ENCODE measurements at regions of chr1 and their contacts with region 1.

Region 1: DNA sequence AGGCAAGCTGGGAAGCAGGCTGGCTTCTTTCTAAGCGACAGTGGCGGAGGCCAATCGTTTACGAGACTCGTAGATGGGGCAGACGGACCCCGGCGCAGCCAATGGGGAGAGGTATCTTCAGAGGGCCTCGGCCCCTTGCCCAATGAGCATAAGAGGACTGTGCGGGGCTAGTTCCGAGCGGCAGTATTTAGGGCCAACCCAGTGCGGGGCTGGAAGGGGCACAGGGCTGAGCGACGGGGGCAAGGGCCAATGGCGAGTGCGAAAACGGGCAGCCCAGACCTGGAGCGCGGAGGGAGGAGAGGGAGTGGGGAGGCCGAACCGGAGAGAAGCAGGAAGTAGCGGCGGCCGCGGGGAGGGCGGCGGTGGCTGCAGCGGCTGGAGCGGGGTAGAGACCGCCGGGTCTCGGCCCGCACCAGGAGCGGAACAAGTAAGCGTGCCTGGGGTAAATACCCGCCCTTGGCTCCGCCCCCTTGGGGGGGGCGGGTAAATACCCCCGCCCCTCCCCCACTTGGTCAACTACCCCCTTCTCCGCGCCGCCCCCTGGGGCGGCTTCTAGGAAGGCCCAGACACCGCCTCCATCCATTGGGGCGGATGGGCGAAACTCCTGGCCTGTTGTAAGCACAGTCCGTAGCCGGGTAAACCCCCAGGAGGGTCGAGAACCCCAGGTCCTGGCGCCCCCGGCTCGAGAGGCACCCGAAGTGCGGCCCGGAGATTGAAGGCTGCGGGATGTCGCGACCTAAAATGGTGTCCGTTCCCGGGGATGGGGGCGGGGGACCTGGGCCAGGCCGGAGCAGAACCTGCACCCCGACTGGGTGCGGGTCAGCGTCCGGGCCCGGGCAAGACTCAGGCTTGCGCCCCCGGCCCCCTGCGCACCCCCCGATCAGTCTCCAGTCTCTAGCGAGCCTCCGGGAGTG is at the start of gene ZNF687:
- DNase-seq: peak; percentile 100
- H3K4me3 Mint-ChIP-seq: peak within 1 kb of the TSS; percentile 97
- H3K27ac Mint-ChIP-seq: peak within 1 kb of the TSS; percentile 99
- H3K4me1 Mint-ChIP-seq: peaks cover 19% of the 10 kb centered on the region
- H3K27me3 Mint-ChIP-seq: peaks cover 9% of the 10 kb centered on the region
- CTCF ChIP-seq: no peak
- total RNA-seq, gene ZNF687: 26.3 and 27.5 TPM in 2 replicates

Region 2: GRCh38 chr1:151189638-151190445 is 92.4 kb before region 1 on chr1 and contains the start of gene VPS72:
- CTCF ChIA-PET with region 1: no interaction called
- POLR2A ChIA-PET with region 1: interaction called, 19 read pairs
- intact Hi-C with region 1: no loop called
- DNase-seq: peak; percentile 93
- H3K4me3 Mint-ChIP-seq: peak within 1 kb of the TSS; percentile 83
- H3K27ac Mint-ChIP-seq: peak within 1 kb of the TSS; percentile 90
- H3K4me1 Mint-ChIP-seq: peaks cover 33% of the 10 kb centered on the region
- H3K27me3 Mint-ChIP-seq: no peaks in the 10 kb centered on the region
- CTCF ChIP-seq: no peak
- total RNA-seq, gene VPS72: 106 and 108 TPM in 2 replicates

Region 3: GRCh38 chr1:151198255-151199127 is 83.7 kb before region 1 on chr1 and contains the start of gene PIP5K1A:
- CTCF ChIA-PET with region 1: interaction called, 5 read pairs
- POLR2A ChIA-PET with region 1: interaction called, 38 read pairs
- intact Hi-C with region 1: loop called (anchors 1 kb)
- DNase-seq: peak; percentile 100
- H3K4me3 Mint-ChIP-seq: peak within 1 kb of the TSS; percentile 93
- H3K27ac Mint-ChIP-seq: peak within 1 kb of the TSS; percentile 95
- H3K4me1 Mint-ChIP-seq: peaks cover 40% of the 10 kb centered on the region
- H3K27me3 Mint-ChIP-seq: no peaks in the 10 kb centered on the region
- CTCF ChIP-seq: no peak
- total RNA-seq, gene PIP5K1A: 150 and 163 TPM in 2 replicates

Region 4: DNA sequence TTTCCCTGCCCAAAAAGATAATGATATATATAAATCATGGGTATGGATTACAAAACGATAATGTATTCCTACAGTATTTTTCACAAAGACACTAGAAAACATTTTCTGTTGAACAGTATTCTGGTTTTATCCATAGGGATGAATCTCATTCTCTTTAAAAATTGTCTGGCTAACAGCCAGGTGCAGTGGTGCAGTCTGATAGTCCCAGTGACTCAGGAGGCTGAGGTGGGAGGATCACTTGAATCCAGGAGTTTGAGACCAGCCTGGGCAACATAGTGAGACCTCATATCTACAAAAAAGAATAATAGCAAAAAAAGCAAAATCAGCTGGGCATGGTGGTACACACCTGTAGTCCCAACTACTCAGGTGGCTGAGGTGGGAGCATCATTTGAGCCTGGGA is 60.6 kb before region 1 on chr1:
- CTCF ChIA-PET with region 1: no interaction called
- POLR2A ChIA-PET with region 1: no interaction called
- intact Hi-C with region 1: no loop called
- DNase-seq: peak; percentile 26
- H3K4me3 Mint-ChIP-seq: no peak overlapping the region
- H3K27ac Mint-ChIP-seq: peak overlapping the region; percentile 43
- H3K4me1 Mint-ChIP-seq: peaks cover 14% of the 10 kb centered on the region
- H3K27me3 Mint-ChIP-seq: no peaks in the 10 kb centered on the region
- CTCF ChIP-seq: no peak

Region 5: DNA sequence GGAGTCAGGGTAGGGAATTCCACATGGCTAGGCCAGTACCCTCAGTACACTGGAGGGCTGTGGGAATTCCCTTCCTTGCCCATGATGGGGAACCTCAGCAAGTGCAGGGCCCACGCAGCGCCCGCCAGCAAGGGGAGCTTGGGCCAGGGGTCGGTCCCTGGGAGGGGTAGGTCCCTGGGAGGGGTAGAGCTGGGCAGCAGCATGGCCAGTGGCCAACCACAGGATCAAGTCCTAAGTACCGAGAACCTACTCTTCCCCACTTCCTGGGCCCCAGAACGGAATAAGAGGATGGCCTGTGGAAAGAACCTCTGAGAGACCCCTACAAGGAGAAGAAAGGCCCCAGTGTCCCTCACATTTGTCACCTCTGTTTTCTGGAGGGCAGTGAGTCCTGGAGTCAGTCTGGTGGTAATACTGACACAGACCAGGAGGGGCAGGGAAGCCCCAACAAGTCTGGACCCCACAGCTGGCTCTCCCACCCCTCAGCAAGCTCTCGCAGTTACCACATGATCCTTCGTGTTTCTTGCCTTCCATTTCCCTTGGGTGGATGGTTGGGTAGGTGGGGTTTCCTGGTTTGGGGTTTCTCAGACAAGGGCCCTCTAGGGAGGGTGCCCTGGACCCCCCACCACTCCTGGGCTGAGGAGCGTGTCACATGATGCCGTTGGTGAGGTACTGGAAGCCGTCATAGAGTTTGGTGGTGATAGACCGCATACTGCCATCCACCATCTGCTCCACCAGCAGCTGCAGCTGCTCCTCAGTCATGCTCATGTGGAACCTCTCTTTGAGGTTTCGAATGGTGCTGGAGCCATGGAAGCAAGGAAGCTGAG is 10.2 kb after region 1 on chr1:
- CTCF ChIA-PET with region 1: interaction called, 5 read pairs
- POLR2A ChIA-PET with region 1: interaction called, 39 read pairs
- intact Hi-C with region 1: no loop called
- DNase-seq: no peak
- H3K4me3 Mint-ChIP-seq: no peak overlapping the region
- H3K27ac Mint-ChIP-seq: no peak overlapping the region
- H3K4me1 Mint-ChIP-seq: no peaks in the 10 kb centered on the region
- H3K27me3 Mint-ChIP-seq: no peaks in the 10 kb centered on the region
- CTCF ChIP-seq: no peak

Region 6: DNA sequence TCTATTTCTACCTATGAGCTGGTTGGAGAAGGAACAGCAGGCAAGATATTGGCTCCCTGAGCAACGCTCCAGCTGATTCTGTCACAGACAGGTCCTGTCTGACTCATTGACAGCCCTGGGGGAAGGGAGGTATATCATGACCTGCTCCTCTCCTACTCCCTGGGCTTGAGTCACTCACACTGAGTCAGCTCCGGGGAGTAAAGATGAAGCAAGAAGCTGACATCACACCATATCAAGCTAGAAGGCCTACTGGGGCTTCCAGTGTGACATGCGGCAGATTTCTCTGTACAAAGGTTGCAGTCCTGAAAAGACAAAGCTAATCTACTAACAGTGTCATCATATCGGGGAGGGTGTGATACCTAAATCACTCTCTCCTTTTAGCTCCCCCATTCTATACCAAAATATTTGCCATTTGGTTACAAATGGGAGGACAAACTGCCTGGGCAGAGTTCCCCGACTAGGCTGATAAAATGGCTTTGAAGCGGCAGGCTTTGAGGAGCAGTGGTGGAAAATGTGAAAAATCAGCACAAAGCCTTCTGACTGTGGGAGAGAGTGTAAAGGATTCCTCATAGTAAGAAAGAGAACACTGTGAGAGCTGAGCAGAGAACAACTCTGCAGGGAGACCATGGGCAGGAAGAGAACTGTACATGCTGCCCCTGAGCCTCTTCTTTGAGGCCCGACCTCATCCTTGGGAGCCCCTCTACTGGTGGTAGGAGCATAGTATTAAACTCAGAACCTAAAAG is 29.5 kb after region 1 on chr1:
- CTCF ChIA-PET with region 1: interaction called, 11 read pairs
- POLR2A ChIA-PET with region 1: interaction called, 32 read pairs
- intact Hi-C with region 1: no loop called
- DNase-seq: peak; percentile 100
- H3K4me3 Mint-ChIP-seq: no peak overlapping the region
- H3K27ac Mint-ChIP-seq: peak overlapping the region; percentile 95
- H3K4me1 Mint-ChIP-seq: peaks cover 40% of the 10 kb centered on the region
- H3K27me3 Mint-ChIP-seq: no peaks in the 10 kb centered on the region
- CTCF ChIP-seq: no peak

Region 7: GRCh38 chr1:151444783-151445177 is 162.6 kb after region 1 on chr1:
- CTCF ChIA-PET with region 1: no interaction called
- POLR2A ChIA-PET with region 1: no interaction called
- intact Hi-C with region 1: no loop called
- DNase-seq: no peak
- H3K4me3 Mint-ChIP-seq: no peak overlapping the region
- H3K27ac Mint-ChIP-seq: peak overlapping the region; percentile 46
- H3K4me1 Mint-ChIP-seq: peaks cover 24% of the 10 kb centered on the region
- H3K27me3 Mint-ChIP-seq: no peaks in the 10 kb centered on the region
- CTCF ChIP-seq: no peak

Region 8: GRCh38 chr1:152855661-152856060 is 1573.4 kb after region 1 on chr1:
- CTCF ChIA-PET with region 1: no interaction called
- POLR2A ChIA-PET with region 1: no interaction called
- intact Hi-C with region 1: no loop called
- DNase-seq: no peak
- H3K4me3 Mint-ChIP-seq: no peak overlapping the region
- H3K27ac Mint-ChIP-seq: no peak overlapping the region
- H3K4me1 Mint-ChIP-seq: no peaks in the 10 kb centered on the region
- H3K27me3 Mint-ChIP-seq: no peaks in the 10 kb centered on the region
- CTCF ChIP-seq: no peak